ENCODE measurements at regions of chr4 and their contacts with region 1.

Region 1: GRCh38 chr4:67880866-67881610 is 2.8 kb downstream of the TMPRSS11D start:
- DNase-seq: no peak
- ATAC-seq: no peak
- H3K4me3 ChIP-seq: no peak overlapping the region
- H3K27ac ChIP-seq: no peak overlapping the region
- H3K4me1 ChIP-seq: peaks cover 0 to 19% (median 0%) of the 10 kb centered on the region in 9 donors
- H3K27me3 ChIP-seq: no peaks in the 10 kb centered on the region
- CTCF ChIP-seq: no peak

Region 2: GRCh38 chr4:67980512-67980911 is 99.5 kb after region 1 on chr4:
- intact Hi-C with region 1: no loop called
- DNase-seq: no peak
- ATAC-seq: no peak
- H3K4me3 ChIP-seq: no peak overlapping the region
- H3K27ac ChIP-seq: no peak overlapping the region
- H3K4me1 ChIP-seq: no peaks in the 10 kb centered on the region
- H3K27me3 ChIP-seq: no peaks in the 10 kb centered on the region
- CTCF ChIP-seq: no peak

Region 3: DNA sequence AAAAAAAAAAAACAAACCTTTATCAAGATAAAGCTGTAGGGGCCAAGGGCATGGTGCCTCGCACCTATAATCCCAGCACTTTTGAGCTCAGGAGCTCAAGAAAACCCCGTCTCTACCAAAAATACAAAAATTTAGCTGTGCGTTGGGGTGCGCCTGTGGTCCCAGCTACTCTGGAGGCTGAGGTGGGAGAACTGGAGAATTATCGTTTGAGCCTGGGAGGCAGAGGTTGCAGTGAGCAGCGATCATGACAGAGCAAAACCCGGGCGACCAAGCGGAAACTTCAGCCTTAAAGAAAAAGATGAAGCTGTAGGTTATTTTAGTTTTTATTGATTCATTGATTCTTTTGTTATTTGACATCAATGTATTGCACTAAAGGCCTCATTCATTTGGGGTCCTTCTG is 243.2 kb after region 1 on chr4:
- intact Hi-C with region 1: no loop called
- DNase-seq: no peak
- ATAC-seq: no peak
- H3K4me3 ChIP-seq: no peak overlapping the region
- H3K27ac ChIP-seq: no peak overlapping the region
- H3K4me1 ChIP-seq: no peaks in the 10 kb centered on the region
- H3K27me3 ChIP-seq: no peaks in the 10 kb centered on the region
- CTCF ChIP-seq: no peak

Region 4: DNA sequence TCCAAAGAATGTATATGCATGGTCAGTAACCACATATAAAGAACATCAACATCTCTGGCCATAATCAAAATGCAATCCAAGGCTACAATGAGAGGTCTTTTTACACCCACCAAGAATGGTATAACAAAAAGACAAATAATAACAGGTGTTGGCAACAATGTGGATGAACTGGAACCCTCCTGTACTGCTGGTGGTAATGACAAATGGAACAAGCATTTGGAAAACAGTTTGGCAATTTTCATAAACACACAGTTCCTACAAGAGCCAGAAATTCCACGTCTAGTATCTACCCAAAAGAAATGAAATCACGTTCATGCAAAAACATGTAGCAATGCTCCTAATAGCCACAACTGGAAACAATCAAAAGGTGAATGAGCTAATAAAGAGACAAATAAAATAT is 1603.0 kb after region 1 on chr4:
- intact Hi-C with region 1: loop called in 1 of 10 experiments (anchors 5 kb)
- DNase-seq: no peak
- ATAC-seq: no peak
- H3K4me3 ChIP-seq: no peak overlapping the region
- H3K27ac ChIP-seq: no peak overlapping the region
- H3K4me1 ChIP-seq: no peaks in the 10 kb centered on the region
- H3K27me3 ChIP-seq: no peaks in the 10 kb centered on the region
- CTCF ChIP-seq: no peak

Measured in heart right ventricle (tissue), 16 donors.